ENCODE measurements at regions of chr15 and their contacts with region 1.

Region 1: DNA sequence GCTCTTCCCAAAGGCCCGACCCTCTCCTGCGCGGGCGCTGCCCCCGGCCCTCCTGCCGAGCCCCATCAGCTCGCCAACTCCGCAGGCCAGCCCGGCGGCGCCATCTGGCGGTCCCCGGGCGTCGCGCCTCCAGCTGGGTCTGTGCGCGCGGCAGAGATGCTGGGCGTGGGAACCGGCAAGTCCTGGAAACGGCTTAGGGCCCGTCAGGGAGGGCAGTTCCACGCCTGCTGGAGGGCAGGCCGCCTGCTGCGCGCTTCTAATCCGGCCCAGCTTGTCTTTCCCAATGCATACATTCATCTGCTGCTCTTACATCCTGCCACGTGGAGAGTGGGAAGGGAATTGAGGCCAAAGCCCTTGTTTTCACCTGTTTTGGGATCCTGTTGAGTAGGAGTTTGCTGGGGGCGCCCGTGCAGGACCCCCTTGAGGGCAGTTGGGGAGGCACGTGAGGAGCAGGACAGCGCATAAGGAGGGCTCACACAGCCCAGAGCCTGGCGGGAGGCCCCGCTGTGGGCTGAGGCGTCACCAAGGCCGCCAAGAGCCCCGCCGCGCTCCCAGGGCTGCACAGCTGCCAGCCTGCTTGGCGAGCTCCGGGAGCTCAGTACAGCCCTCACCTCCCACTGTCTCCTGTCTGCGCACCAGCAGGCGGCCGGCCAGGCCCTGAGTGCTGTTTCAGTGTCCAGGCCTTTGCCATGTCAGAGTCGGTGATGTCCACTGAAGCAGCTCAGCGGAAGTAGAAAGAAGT is 165.6 kb downstream of the NSMCE3 start:
- DNase-seq: peak; percentile 79
- H3K4me3 ChIP-seq: peak overlapping the region in 2 of 3 experiments; percentile 18 to 32
- H3K27ac ChIP-seq: no peak overlapping the region
- H3K4me1 ChIP-seq: no peaks in the 10 kb centered on the region
- H3K27me3 ChIP-seq: no peaks in the 10 kb centered on the region
- CTCF ChIP-seq: peak; percentile 93 to 96
- POLR2A ChIP-seq: no peak

Region 2: GRCh38 chr15:28786521-28786920 is 317.5 kb before region 1 on chr15:
- CTCF ChIA-PET with region 1: no interaction called
- POLR2A ChIA-PET with region 1: no interaction called
- dilution Hi-C with region 1: no loop called
- intact Hi-C with region 1: loop called (anchors 2 kb)
- DNase-seq: no peak
- H3K4me3 ChIP-seq: no peak overlapping the region
- H3K27ac ChIP-seq: no peak overlapping the region
- H3K4me1 ChIP-seq: no peaks in the 10 kb centered on the region
- H3K27me3 ChIP-seq: peaks cover 4 to 6% of the 10 kb centered on the region in 2 experiments
- CTCF ChIP-seq: no peak
- POLR2A ChIP-seq: no peak

Region 3: GRCh38 chr15:28975766-28976179 is 128.2 kb before region 1 on chr15:
- CTCF ChIA-PET with region 1: interaction called, 5 read pairs
- POLR2A ChIA-PET with region 1: no interaction called
- dilution Hi-C with region 1: no loop called
- intact Hi-C with region 1: loop called (anchors 5 kb)
- DNase-seq: peak; percentile 32
- H3K4me3 ChIP-seq: no peak overlapping the region
- H3K27ac ChIP-seq: no peak overlapping the region
- H3K4me1 ChIP-seq: peaks cover 10% of the 10 kb centered on the region
- H3K27me3 ChIP-seq: peaks cover 0 to 1% of the 10 kb centered on the region in 2 experiments
- CTCF ChIP-seq: peak; percentile 75 to 87
- POLR2A ChIP-seq: no peak

Region 4: DNA sequence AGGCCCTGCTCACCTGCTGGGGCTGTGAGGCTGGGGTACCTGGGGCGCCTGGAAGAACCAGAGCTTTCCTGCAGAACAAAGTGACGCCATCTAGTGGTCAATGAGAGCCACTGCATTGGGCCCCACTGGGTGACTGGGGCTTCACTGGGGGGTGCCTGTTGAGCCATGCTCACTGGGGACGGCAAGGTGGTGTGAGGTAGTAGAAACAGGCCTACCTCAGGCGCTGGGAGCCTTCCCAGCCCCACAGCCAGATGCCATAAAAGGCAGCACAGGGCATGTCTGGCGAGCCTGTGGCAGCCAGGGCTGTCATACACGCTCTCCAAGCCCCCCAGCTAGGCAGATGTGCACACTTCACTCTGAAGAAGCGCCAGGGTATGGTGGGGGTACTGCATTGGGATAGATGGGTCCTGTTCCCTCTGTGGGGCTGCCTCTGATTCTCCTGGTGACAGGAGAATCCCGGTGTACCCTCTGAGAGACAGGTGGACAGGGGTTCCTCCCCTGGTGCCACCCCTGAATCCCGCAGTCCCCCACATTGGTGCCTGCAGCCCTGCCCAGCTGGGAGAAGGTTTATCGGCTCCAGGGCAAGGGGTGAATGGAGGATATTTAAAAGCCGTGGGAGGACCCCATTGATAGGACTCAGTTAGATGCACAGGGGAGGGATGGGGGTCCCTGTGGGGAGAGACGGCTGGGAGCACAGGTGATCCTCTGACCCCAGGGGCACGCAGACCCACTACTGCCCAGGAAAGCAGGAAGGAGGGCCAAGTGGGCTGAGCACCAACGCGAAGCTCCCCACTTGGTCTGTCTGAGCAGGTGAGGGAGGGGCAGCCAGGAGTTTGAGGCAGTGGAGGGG is 13.2 kb before region 1 on chr15:
- CTCF ChIA-PET with region 1: interaction called, 73 read pairs
- POLR2A ChIA-PET with region 1: no interaction called
- dilution Hi-C with region 1: no loop called
- intact Hi-C with region 1: no loop called
- DNase-seq: no peak
- H3K4me3 ChIP-seq: no peak overlapping the region
- H3K27ac ChIP-seq: no peak overlapping the region
- H3K4me1 ChIP-seq: no peaks in the 10 kb centered on the region
- H3K27me3 ChIP-seq: no peaks in the 10 kb centered on the region
- CTCF ChIP-seq: peak; percentile 79 to 83
- POLR2A ChIP-seq: no peak

Region 5: DNA sequence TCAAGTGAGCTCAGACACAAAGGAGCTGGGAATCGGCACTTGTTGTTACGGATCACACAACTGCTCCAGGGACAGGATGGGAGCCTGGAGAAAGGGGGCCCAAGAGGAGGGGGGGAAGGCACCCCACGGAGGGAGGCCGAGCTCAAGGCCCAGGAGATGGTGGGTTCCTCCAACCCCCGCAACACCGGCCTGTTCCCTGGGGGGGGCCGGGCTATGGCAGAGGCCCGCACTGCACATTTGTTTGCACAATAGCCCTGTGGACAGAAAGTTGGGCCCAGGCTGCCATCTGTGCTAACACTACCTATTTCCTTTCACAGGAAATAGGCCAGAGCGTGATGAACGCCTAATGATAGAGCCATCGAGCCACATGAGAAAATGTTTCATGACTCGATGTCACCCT is 18.5 kb after region 1 on chr15:
- CTCF ChIA-PET with region 1: interaction called, 49 read pairs
- POLR2A ChIA-PET with region 1: no interaction called
- dilution Hi-C with region 1: no loop called
- intact Hi-C with region 1: no loop called
- DNase-seq: no peak
- H3K4me3 ChIP-seq: no peak overlapping the region
- H3K27ac ChIP-seq: no peak overlapping the region
- H3K4me1 ChIP-seq: no peaks in the 10 kb centered on the region
- H3K27me3 ChIP-seq: no peaks in the 10 kb centered on the region
- CTCF ChIP-seq: no peak
- POLR2A ChIP-seq: no peak

Region 6: GRCh38 chr15:29139540-29140459 is 35.8 kb after region 1 on chr15:
- CTCF ChIA-PET with region 1: interaction called, 13 read pairs
- POLR2A ChIA-PET with region 1: no interaction called
- dilution Hi-C with region 1: no loop called
- intact Hi-C with region 1: no loop called
- DNase-seq: peak; percentile 33
- H3K4me3 ChIP-seq: no peak overlapping the region
- H3K27ac ChIP-seq: no peak overlapping the region
- H3K4me1 ChIP-seq: no peaks in the 10 kb centered on the region
- H3K27me3 ChIP-seq: peaks cover 0 to 3% of the 10 kb centered on the region in 2 experiments
- CTCF ChIP-seq: peak; percentile 86 to 96
- POLR2A ChIP-seq: no peak